ENCODE measurements at regions of chr9 and their contacts with region 1.

Region 1: GRCh38 chr9:15104826-15105420 is 194.7 kb upstream of the FREM1 start:
- DNase-seq: peak; percentile 39 to 59 (median 52)
- H3K4me3 ChIP-seq: no peak overlapping the region
- H3K27ac ChIP-seq: no peak overlapping the region
- H3K4me1 ChIP-seq: no peaks in the 10 kb centered on the region
- H3K27me3 ChIP-seq: no peaks in the 10 kb centered on the region

Region 2: DNA sequence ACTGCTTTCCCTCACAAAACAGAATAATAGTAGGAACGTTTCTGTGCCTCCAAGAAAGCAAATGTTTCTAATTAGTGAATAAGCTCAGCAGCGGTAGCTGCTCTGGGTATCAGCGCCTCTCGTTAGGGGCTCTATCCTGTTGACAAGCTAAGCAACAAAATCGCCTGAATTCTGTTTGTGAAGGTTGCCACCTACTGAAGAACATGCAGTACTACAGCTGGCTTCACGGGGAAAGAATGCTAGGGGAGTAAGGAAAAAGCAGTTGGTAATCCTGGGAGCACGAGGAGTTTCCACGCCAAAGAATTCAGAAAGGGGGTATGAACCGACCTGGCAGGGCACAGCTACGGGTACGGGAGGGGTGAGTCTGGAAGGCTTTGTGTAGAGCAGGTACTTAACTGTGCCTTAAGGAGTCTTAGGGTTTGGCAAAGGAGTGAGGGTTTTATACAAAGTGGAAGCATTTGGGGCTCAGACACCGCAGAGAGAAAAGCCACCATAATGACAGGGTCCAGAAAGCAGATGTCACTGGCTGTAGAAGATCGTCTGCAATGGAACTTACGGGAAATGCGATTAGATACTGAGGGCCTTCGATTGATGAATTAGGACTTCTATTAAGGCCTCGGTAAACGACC is 30.4 kb after region 1 on chr9:
- CTCF ChIA-PET with region 1: interaction called, 15 read pairs
- POLR2A ChIA-PET with region 1: no interaction called
- DNase-seq: peak; percentile 52 to 75 (median 74)
- H3K4me3 ChIP-seq: peak overlapping the region in 4 of 7 experiments; percentile 6 to 62 (median 49)
- H3K27ac ChIP-seq: no peak overlapping the region
- H3K4me1 ChIP-seq: peaks cover 0 to 3% (median 2%) of the 10 kb centered on the region in 4 experiments
- H3K27me3 ChIP-seq: no peaks in the 10 kb centered on the region

Measured in common myeloid progenitor, CD34-positive (primary cell).